Right ventricle myocardium superior (tissue), 1 donor: ENCODE measurements at regions of chr10 and their contacts with region 1.

Region 1: DNA sequence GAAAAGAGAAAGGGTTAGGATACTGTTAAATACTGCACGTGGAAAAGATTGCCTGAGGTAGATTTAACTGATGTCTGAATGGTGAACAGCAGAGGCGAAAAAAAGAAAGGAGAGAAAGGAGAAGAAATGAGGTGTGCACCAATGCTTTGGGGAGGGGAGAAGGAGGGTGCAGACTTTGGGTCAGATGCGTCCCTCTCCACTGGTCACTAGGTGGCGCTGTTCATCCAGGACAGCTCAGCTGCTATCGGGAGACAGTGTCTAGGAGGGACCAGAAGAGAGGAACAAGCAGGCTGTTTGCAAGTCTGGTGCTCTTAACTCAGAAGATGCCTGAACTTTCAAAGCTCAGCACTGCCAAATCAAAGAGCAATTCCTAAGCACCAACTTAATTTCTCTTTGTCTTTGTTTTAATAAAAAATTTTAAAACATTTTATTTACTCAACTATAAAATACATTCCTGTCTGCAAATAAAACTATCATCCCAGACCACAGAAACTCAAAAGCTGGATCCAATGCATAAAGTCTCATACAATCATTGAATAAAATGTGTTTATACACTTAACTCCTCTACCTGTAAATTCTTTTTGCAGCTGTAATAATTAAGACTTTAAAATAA is 83.9 kb upstream of the PDLIM1 start:
- DNase-seq: peak; percentile 72
- ATAC-seq: peak; percentile 82

Region 2: DNA sequence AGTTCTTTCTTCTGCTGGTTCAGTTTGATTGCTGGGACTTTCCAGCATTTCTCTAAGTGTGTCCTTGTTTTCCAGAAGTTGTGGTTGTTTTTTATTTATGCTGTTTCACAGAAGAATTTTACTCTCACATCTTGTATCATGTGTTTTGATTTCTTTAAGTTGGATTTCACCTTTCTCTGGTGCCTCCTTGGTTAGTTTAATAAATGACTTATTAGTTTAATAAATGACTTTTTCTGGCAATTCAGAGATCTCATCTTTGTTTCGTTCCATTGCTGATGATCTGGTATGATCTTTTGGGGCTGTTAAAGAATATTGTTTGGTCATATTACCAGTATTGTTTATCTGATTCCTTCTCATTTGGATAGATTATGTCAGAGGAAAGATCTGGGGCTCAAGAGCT is 496.1 kb before region 1 on chr10:
- intact Hi-C with region 1: no loop called
- DNase-seq: no peak
- ATAC-seq: no peak

Region 3: GRCh38 chr10:94991243-94991888 is 383.3 kb before region 1 on chr10:
- intact Hi-C with region 1: no loop called
- DNase-seq: no peak
- ATAC-seq: no peak

Region 4: DNA sequence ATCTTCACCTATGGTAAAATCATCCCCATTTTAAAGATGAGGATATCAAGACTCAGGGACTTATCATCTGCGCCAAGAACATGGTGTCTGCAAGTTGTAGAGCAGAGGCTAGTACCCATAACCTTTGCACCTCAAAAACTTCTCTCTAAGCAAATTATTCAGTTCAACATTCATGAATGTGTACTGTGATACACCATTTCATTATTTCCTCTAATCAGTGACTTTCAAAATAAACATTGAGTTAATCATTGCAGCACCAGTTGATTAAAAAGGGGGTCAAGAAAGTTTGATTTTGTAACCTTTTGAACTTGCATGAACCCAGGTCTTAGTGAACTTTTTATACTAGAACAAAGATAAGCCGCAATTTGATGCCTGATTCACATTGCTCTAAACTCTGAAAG is 257.8 kb before region 1 on chr10:
- intact Hi-C with region 1: no loop called
- DNase-seq: no peak
- ATAC-seq: no peak

Region 5: DNA sequence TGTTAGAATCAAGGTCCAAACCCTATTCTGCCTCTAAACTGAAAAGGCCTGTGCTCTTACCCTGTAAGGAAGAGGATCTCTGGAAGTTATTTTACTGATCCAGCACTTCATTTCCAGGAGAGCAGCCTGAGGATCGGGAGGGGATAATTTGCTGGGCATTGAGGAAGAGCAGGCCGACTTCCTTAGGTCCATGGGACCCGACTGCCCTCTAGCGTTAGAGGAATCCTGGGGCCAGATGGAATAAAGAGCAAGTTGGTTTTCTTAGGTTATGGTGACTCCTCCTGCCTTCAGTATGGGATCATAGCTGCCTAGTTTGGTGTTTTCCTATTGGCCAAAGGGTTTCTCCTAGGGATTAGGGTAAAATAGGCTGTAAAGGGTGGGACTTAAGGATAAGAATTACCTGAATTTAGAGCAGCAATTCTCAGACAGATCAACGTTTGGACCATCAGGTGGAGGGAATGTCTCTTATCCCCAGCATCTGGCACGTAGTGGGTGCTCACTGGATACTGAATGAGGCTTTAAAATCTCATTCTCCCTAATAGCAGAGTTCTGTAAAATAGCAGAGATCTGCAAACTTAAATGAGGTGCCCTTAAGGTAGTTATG is 226.5 kb after region 1 on chr10:
- intact Hi-C with region 1: loop called (anchors 2 kb)
- DNase-seq: peak; percentile 81
- ATAC-seq: peak; percentile 93

Region 6: DNA sequence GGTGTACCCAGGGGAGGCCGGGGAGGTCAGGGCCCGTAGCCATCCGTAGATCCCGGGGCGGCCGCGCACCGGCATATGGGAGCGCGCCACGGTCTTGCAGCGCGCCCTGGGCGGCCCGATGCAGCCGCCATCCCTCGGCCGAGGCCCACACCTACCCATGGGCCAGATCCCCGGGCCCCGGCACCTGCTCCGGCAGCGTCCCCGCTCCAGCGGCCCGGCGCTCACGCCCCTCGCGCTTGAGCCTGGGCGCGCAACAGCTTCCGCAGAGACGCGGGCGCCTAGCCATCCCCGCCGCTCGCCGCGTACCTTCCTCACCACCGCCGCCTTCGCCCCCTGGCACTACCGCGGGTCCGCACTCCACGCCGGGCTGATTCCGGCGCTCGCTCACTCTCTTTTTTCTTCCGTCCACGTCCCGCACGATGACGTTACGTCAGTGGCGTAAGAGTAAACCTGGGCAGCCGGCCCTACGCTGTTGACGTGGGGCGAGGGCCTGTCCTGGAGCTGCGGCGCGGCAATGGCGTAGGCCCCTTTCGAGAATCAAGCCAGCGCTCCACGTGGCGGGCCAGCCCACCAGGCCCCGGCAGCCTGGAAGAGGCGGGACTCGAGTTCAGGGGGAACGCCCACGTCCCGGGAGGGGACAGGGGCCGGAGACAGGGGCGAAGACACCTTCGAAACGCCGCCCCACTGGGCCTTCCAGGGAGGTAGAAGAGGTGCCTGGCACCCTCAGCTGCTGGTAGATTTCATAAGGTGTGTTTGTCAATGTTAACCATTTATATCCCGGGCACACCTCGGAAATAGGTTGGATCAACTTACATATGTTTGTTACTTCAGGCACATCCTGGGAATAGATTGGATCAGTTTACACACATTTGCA is 281.8 kb after region 1 on chr10 and contains the start of gene ALDH18A1:
- intact Hi-C with region 1: no loop called
- DNase-seq: peak; percentile 96
- ATAC-seq: peak; percentile 97
- total RNA-seq, gene ALDH18A1: 9.7 TPM